ENCODE measurements at regions of chr9 and their contacts with region 1.

Region 1: GRCh38 chr9:75588809-75589208 is 301.7 kb upstream of the PCSK5 start:
- DNase-seq: no peak
- ATAC-seq: no peak
- H3K4me3 ChIP-seq: no peak overlapping the region
- H3K27ac ChIP-seq: no peak overlapping the region
- H3K4me1 ChIP-seq: no peaks in the 10 kb centered on the region
- H3K27me3 ChIP-seq: no peaks in the 10 kb centered on the region

Region 2: GRCh38 chr9:75378036-75378435 is 210.8 kb before region 1 on chr9:
- intact Hi-C with region 1: loop called in 1 of 2 experiments (anchors 10 kb)
- DNase-seq: peak; percentile 81 to 84
- ATAC-seq: peak; percentile 87
- H3K4me3 ChIP-seq: no peak overlapping the region
- H3K27ac ChIP-seq: no peak overlapping the region
- H3K4me1 ChIP-seq: no peaks in the 10 kb centered on the region
- H3K27me3 ChIP-seq: no peaks in the 10 kb centered on the region

Region 3: DNA sequence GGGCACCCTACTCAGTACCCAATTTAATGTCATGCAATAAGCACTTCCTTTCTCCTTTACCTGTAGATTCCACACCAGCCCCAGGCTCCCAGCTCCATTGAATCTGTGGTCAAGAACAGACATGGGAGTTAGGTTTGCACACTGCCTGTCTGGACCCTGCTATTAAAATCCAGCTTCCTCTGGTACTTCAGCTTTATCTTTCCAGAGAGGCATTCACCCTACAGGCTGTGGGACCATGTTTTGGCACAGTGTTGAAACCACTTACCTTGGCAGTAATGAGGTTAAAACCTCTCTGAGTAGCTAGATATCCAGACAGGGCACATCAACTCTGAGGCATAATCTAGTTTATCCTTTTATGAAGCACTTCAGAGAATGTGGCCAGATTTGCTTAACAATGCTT is 110.2 kb after region 1 on chr9:
- intact Hi-C with region 1: no loop called
- DNase-seq: no peak
- ATAC-seq: no peak
- H3K4me3 ChIP-seq: no peak overlapping the region
- H3K27ac ChIP-seq: no peak overlapping the region
- H3K4me1 ChIP-seq: no peaks in the 10 kb centered on the region
- H3K27me3 ChIP-seq: no peaks in the 10 kb centered on the region

Measured in aorta (tissue), 5 donors.